ACHN (cell line): ENCODE measurements at regions of chr13 and their contacts with region 1.

Region 1: DNA sequence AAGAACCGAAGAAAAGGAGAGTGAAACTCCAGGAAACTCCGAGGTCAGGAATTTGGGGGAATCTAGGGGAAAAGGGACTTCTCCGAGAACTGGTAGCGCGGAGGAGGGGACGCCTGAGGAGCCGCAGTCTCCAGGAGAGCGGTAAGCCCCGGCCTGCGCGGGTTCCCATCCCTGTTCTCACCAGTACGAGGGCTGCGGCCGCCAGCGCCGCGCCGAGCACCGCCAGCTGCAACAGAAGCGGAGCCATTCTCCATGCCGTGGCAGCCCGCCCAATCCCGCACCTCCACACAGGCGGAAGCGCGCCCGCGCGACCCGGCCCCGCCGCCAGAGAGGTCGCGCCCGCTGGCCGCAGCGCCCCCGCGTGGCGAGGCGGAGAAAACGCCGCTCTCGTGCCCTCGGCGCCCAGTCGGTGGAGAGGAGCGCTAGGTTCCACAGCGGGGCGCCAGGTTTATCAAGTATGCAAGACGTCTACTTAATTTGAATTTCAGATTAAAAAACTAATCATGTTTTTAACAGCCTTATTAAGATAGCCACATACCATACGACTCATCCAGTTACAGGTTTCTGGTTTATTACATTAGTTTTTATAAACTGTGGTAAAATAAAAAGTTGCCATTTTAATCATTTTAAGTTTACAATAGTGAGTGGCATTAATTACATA is at the start of gene ALG5:
- DNase-seq: peak; percentile 87

Region 2: DNA sequence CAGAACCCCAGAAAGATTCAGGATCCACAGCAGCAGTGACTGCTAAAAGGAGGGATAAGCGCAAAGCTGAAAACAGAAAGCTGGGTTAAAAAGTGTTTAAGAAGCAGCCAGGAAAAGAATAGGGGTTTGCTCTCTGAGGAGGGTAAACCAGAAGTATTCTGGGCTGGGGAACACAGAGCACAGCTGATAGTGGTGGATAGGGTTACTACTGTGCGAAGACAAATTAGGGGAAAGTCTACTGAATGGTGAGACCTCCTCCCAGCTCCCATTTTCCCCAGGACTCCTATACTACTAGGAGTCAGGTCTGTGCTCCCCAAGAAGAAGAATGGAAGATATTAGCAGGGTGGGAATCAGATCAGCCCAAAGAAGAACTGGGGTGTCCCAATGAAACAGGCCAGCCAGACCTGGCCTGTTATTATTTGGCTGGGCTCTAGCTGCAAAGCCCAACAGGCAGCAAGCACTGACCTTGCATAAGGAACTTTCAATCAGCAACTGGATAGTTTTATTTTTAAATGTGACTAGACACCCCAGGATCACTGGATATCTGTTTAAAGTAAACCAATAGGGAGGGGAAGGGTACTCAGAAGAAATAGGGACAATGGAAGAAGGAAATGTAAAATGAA is 368.9 kb before region 1 on chr13:
- in situ Hi-C with region 1: no loop called
- DNase-seq: no peak

Region 3: DNA sequence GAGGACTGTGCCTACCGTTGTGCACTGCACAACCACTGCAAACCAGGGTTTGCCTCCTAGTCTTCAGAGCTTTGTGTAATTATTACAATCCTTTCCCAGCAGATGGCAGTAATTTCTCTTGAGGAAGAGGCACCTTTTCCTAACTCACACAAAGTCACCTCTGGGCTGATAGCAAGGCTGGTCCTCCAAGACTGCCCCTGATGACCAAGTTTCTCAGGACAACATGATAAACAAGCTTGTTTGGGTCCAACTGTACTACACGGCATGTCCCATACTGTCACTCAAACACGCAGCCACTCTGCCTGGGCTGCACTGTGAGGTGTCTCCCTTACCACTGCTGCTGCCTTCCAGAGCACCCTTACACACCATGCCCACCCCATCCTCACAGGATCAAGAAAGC is 140.9 kb before region 1 on chr13:
- in situ Hi-C with region 1: loop called (anchors 25 kb)
- DNase-seq: peak; percentile 68

Region 4: DNA sequence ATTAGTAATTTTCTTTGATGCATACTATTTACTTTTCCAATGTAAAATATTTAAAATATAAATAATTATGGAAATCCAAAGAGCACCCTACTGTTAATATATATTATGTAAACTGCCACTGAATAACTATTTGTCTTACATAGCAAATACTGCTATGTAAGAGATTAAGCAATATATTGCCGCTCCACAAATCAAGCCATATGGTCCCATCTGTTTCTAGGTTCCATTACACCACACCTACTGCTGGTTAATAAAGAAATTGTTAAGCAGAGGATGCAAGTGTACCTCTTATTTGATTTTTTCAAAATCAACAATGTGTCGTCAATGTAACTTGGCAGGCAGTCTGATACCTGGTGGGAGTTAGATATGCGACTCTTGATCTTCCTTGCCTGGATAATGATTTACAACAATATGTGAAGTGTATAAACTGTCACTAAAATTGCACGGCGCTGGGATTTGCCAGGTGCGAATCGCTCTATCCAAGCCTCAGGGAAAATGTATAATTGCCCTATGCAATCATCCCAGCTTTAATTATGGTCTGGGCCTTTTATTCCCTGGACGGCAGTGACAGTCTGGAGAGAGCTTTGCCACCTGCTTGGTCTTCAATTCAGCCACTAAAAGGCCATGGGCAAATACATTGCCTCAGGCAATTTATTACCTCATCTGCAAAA is 95.1 kb before region 1 on chr13:
- in situ Hi-C with region 1: no loop called
- DNase-seq: no peak

Region 5: GRCh38 chr13:37187105-37187504 is 187.9 kb after region 1 on chr13:
- in situ Hi-C with region 1: no loop called
- DNase-seq: no peak